Prostate gland (tissue), 2 donors: ENCODE measurements at regions of chr2 and their contacts with region 1.

Region 1: GRCh38 chr2:121356058-121356640 is 71.1 kb upstream of the TFCP2L1 start:
- DNase-seq: peak; percentile 74
- H3K4me3 ChIP-seq: no peak overlapping the region
- H3K27ac ChIP-seq: peak overlapping the region; percentile 67 to 76
- H3K4me1 ChIP-seq: peaks cover 1% of the 10 kb centered on the region
- H3K27me3 ChIP-seq: no peaks in the 10 kb centered on the region
- CTCF ChIP-seq: peak; percentile 52 to 80 (median 76)
- POLR2A ChIP-seq: no peak

Region 2: DNA sequence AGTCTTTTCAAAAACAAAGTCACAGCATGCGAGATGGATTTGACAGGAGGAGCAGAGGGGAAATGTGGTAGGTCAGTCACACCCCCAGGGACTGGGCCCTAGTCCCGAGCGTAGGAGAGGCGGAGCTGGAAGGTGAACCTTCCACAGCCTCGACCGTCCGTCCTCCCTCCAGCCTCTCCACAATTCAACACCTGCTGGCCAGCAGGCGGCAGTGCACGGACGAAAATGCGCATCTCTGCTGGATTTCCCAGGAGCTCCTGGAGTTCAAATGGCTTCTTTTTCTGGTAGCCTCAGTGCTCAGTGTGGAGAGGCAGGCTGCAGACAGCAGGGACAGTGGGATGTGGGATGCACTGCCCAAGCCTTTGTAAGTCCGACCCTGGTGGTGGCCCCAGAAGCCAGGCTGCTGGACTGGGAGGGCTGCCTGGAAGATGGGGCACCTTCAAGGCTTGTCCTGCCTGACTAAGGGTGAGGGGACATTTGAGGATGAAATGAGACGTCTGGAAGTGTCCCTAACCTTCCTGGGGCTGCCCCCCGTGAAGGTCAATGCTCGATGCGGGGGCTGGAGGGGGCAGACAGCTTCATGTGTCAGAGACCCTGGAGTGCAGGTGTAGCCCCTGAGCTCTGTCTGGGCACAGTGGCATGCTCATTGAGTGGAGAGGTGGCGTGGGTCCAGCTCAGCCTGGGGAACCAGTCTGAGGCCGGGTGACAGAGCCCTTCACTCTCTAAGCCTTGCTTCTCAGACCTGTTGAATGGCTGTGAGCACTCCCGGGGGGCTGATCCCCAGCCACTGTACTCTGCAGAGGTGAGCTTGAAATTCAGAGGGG is 260.7 kb before region 1 on chr2:
- intact Hi-C with region 1: loop called (anchors 2 kb)
- DNase-seq: peak; percentile 73
- H3K4me3 ChIP-seq: no peak overlapping the region
- H3K27ac ChIP-seq: no peak overlapping the region
- H3K4me1 ChIP-seq: no peaks in the 10 kb centered on the region
- H3K27me3 ChIP-seq: no peaks in the 10 kb centered on the region
- CTCF ChIP-seq: peak; percentile 61 to 88 (median 82)
- POLR2A ChIP-seq: no peak

Region 3: DNA sequence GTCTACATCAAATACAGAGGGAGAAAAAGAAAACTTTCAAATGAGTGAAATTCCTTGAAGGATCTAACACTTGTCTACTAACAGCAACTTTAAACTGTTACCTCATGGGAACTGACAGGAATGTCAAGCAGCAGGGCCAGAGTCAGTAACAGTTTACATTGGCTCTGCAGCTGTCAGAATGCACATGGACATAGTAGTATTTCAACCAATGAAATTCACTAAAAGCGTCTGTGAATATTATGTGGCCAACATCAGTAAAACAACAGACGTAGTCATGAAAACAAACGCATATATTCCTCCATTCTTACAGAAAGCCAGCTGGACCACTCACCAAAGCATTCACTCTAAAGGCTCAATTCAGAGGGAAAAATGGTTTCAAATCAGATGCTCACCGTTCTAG is 95.2 kb after region 1 on chr2:
- intact Hi-C with region 1: no loop called
- DNase-seq: no peak
- H3K4me3 ChIP-seq: no peak overlapping the region
- H3K27ac ChIP-seq: no peak overlapping the region
- H3K4me1 ChIP-seq: no peaks in the 10 kb centered on the region
- H3K27me3 ChIP-seq: no peaks in the 10 kb centered on the region
- CTCF ChIP-seq: no peak
- POLR2A ChIP-seq: no peak